Activated CD4-positive, alpha-beta T cell treated with anti-CD3 and anti-CD28 coated beads for 36 hours (primary cell): ENCODE measurements at regions of chrX and their contacts with region 1.

Region 1: GRCh38 chrX:39814391-39814790 is 283.4 kb downstream of the BCOR start:
- DNase-seq: peak; percentile 58
- ATAC-seq: no peak
- H3K4me3 Mint-ChIP-seq: no peak overlapping the region
- H3K27ac Mint-ChIP-seq: no peak overlapping the region
- H3K4me1 Mint-ChIP-seq: peaks cover 29% of the 10 kb centered on the region
- H3K27me3 Mint-ChIP-seq: no peaks in the 10 kb centered on the region

Region 2: GRCh38 chrX:39802354-39802753 is 12.0 kb before region 1 on chrX:
- CTCF ChIA-PET with region 1: no interaction called
- POLR2A ChIA-PET with region 1: no interaction called
- intact Hi-C with region 1: no loop called
- DNase-seq: no peak
- ATAC-seq: no peak
- H3K4me3 Mint-ChIP-seq: no peak overlapping the region
- H3K27ac Mint-ChIP-seq: no peak overlapping the region
- H3K4me1 Mint-ChIP-seq: peaks cover 17% of the 10 kb centered on the region
- H3K27me3 Mint-ChIP-seq: no peaks in the 10 kb centered on the region

Region 3: DNA sequence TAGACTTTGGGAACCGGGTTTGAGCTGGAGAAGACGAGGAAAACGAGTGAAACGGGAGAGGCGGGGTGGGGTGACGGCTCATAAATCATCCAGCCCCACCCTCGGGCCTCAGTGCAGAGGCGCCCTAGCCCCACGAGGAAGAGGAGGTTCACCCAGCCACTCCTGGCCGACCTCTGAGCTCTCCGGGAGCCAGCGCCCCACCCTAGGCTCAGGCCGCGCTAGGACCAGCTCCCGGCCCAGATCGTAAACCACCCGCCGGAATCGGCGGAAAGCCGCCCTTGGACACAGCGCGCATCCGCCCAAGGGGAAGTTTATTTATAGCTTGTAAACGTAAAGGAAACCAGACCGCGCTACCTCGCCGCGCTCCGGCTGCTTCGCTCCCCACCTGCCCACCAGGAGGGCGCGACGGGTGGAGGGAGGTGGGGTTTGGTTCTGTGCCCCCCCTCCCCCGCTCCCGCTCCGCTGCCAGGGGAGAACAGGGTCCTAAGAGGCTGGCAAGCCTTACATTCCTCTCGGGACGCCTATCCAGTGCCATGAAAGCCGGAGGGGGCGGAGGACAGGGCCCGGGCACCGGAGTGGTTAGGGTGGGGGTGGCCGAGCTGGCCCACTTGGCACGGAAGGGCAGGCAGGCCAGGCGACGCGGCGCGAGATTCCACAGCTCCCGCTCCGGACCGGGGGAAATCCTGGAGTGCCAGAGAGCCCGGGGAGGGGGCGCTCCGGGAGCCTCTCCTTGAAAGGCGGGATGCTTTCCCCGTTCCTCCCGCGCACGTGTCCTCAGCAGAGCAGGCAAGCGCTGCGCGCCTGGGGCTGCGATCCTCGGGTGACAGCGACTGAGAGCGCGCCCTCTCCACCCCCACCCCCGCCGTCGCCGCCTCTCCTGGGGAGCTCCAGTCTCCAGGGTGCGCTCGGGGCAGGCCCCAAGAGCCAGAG is 199.1 kb after region 1 on chrX:
- CTCF ChIA-PET with region 1: no interaction called
- POLR2A ChIA-PET with region 1: no interaction called
- intact Hi-C with region 1: loop called (anchors 5 kb)
- DNase-seq: peak; percentile 58
- ATAC-seq: peak; percentile 35
- H3K4me3 Mint-ChIP-seq: peak overlapping the region; percentile 63
- H3K27ac Mint-ChIP-seq: peak overlapping the region; percentile 31
- H3K4me1 Mint-ChIP-seq: peaks cover 25% of the 10 kb centered on the region
- H3K27me3 Mint-ChIP-seq: peaks cover 16% of the 10 kb centered on the region

Region 4: GRCh38 chrX:40266490-40267333 is 452.3 kb after region 1 on chrX:
- CTCF ChIA-PET with region 1: no interaction called
- POLR2A ChIA-PET with region 1: no interaction called
- intact Hi-C with region 1: loop called in 1 of 2 experiments (anchors 2 kb)
- DNase-seq: peak; percentile 74
- ATAC-seq: peak; percentile 88
- H3K4me3 Mint-ChIP-seq: peak overlapping the region; percentile 60
- H3K27ac Mint-ChIP-seq: peak overlapping the region; percentile 63
- H3K4me1 Mint-ChIP-seq: peaks cover 13% of the 10 kb centered on the region
- H3K27me3 Mint-ChIP-seq: no peaks in the 10 kb centered on the region

Region 5: GRCh38 chrX:40468033-40468846 is 653.8 kb after region 1 on chrX:
- CTCF ChIA-PET with region 1: no interaction called
- POLR2A ChIA-PET with region 1: no interaction called
- intact Hi-C with region 1: loop called in 1 of 2 experiments (anchors 10 kb)
- DNase-seq: peak; percentile 72
- ATAC-seq: peak; percentile 90
- H3K4me3 Mint-ChIP-seq: no peak overlapping the region
- H3K27ac Mint-ChIP-seq: no peak overlapping the region
- H3K4me1 Mint-ChIP-seq: peaks cover 38% of the 10 kb centered on the region
- H3K27me3 Mint-ChIP-seq: peaks cover 2% of the 10 kb centered on the region